Activated B cell treated with CpG ODN at 0.5 μM for 24 hours (primary cell): ENCODE measurements at regions of chr2 and their contacts with region 1.

Region 1: GRCh38 chr2:236569573-236569973 is at the start of gene ACKR3:
- DNase-seq: peak; percentile 47
- ATAC-seq: peak; percentile 89
- H3K4me3 Mint-ChIP-seq: peak within 1 kb of the TSS; percentile 86
- H3K27ac Mint-ChIP-seq: peak within 1 kb of the TSS; percentile 73
- H3K4me1 Mint-ChIP-seq: peaks cover 48% of the 10 kb centered on the region
- H3K27me3 Mint-ChIP-seq: no peaks in the 10 kb centered on the region
- CTCF ChIP-seq: no peak
- total RNA-seq, gene ACKR3: 5.8 and 6.6 TPM in 2 replicates

Region 2: DNA sequence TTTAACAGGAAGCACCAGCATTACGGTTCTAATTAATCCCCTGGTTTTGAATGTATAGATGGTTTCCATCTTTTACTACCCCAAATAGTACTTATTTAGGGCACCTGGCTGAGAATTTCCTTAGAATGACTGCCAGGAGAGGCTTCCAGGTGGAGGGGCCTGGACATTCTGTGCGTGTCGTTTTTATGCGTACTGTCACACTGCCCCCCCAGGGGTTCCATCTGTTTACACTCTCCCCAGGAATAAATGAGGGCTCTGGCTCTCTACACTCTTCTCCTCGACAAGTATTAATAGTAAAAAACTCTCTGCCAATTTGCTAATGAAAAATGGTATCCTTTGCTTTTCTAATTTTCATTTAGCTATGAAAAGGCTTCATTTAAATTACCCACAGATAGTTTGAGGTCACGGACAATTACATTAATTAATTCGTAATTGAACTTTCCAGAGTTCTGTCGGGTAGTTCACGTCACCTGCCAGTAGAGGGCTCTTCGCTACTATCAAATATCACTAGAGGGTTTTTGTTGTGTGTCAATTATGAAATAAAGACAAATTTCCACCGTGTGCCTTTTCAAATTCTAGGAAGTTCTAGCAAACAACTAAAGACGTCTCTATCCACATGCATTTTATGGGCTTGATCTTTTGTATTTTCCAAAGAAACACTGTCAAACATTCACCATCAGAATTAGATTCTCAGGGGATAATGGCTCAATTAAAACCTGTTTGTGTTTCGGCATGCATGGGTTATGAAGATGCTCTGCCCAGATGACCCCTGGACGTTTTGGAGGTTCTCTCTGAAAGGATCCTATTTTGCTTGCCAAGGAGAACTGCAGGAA is 216.6 kb before region 1 on chr2:
- CTCF ChIA-PET with region 1: interaction called, 23 read pairs
- POLR2A ChIA-PET with region 1: interaction called, 4 read pairs
- intact Hi-C with region 1: loop called (anchors 1 kb)
- DNase-seq: no peak
- ATAC-seq: peak; percentile 34
- H3K4me3 Mint-ChIP-seq: no peak overlapping the region
- H3K27ac Mint-ChIP-seq: no peak overlapping the region
- H3K4me1 Mint-ChIP-seq: peaks cover 2% of the 10 kb centered on the region
- H3K27me3 Mint-ChIP-seq: peaks cover 13% of the 10 kb centered on the region
- CTCF ChIP-seq: peak; percentile 85

Region 3: GRCh38 chr2:236507393-236508085 is 62.0 kb before region 1 on chr2:
- CTCF ChIA-PET with region 1: interaction called, 264 read pairs
- POLR2A ChIA-PET with region 1: interaction called, 40 read pairs
- intact Hi-C with region 1: no loop called
- DNase-seq: peak; percentile 36
- ATAC-seq: peak; percentile 77
- H3K4me3 Mint-ChIP-seq: peak overlapping the region; percentile 59
- H3K27ac Mint-ChIP-seq: no peak overlapping the region
- H3K4me1 Mint-ChIP-seq: peaks cover 8% of the 10 kb centered on the region
- H3K27me3 Mint-ChIP-seq: peaks cover 24% of the 10 kb centered on the region
- CTCF ChIP-seq: no peak

Region 4: DNA sequence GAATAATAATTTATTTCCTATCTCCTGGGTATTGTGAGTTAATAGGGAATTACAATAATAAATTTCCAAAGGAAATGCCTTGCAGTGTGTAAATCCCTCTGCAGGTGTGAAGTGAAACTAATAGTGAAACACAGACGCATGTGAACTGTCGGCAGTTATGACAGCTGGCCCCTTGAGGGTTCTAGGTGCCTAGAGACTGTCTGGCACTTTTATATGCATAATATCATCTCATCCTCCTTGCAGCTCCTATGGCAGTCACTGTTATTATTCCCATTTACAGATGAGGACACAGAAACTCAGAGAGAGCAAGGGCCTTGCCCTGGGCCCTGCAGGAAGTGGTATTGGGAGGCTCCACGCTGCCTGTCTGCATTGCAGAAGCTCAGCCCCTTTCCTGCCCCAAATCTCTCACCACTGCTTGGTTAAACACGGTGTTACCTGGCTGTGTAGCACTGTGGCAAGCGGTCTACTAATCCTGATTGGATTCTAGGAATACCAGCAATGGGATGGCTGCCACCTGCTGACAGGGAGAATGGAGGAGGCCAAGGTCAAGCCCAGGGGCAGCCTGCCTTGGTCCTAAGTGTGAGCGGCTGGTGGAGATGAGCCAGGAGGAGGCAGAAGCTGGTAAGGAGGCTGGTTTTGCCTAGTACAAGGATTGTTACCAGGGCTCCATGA is 32.7 kb before region 1 on chr2:
- CTCF ChIA-PET with region 1: interaction called, 21 read pairs
- POLR2A ChIA-PET with region 1: interaction called, 90 read pairs
- intact Hi-C with region 1: loop called (anchors 1 kb)
- DNase-seq: no peak
- ATAC-seq: peak; percentile 81
- H3K4me3 Mint-ChIP-seq: peak overlapping the region; percentile 79
- H3K27ac Mint-ChIP-seq: peak overlapping the region; percentile 88
- H3K4me1 Mint-ChIP-seq: peaks cover 54% of the 10 kb centered on the region
- H3K27me3 Mint-ChIP-seq: no peaks in the 10 kb centered on the region
- CTCF ChIP-seq: no peak

Region 5: GRCh38 chr2:236551471-236552211 is 17.9 kb before region 1 on chr2:
- CTCF ChIA-PET with region 1: interaction called, 43 read pairs
- POLR2A ChIA-PET with region 1: interaction called, 90 read pairs
- intact Hi-C with region 1: loop called (anchors 1 kb)
- DNase-seq: no peak
- ATAC-seq: peak; percentile 68
- H3K4me3 Mint-ChIP-seq: peak overlapping the region; percentile 69
- H3K27ac Mint-ChIP-seq: peak overlapping the region; percentile 87
- H3K4me1 Mint-ChIP-seq: peaks cover 86% of the 10 kb centered on the region
- H3K27me3 Mint-ChIP-seq: no peaks in the 10 kb centered on the region
- CTCF ChIP-seq: no peak

Region 6: DNA sequence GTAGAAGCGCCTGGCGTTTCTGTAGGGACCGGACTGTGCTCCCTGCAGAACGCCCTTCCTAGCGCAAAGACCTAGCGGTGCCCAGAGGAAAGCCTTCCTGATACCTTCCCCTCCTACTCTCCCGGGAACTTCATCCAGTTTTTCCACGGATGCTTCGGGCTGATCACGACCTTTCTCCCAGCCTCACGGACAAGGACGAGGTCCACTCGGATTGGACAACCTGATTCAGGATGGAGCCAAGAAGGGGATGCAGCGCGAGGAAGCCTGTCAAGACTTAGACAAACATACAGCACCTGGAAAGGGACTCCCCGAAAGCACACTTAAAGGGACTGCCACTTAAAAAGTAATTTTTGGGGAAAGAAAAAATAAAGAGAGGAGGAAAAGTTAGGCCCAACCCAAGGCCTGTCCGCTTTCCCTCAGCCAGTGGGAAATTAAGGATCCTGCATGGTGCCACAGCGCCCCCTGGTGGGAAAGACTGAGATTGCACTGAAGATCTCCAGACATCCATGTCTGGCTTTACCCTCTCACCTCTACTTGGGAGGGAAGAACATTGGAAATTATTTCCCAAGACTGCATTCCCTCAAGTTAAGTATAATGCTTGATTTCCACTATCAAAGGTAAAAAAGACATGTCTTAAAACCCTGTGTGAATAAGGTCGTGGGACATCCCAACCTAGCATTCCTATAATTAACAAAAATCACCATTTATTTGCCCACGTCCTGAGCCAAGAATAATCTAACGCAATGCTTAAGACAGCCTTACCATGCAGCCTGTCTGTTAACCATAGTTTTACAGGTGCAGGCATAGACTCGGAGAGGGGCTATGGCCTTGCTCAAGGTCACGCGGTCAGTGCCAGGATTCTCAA is 502.7 kb after region 1 on chr2:
- CTCF ChIA-PET with region 1: no interaction called
- POLR2A ChIA-PET with region 1: no interaction called
- intact Hi-C with region 1: loop called (anchors 1 kb)
- DNase-seq: peak; percentile 60
- ATAC-seq: peak; percentile 56
- H3K4me3 Mint-ChIP-seq: no peak overlapping the region
- H3K27ac Mint-ChIP-seq: no peak overlapping the region
- H3K4me1 Mint-ChIP-seq: no peaks in the 10 kb centered on the region
- H3K27me3 Mint-ChIP-seq: no peaks in the 10 kb centered on the region
- CTCF ChIP-seq: peak; percentile 87